Activated B cell treated with CpG ODN at 0.5 μM for 24 hours (primary cell): ENCODE measurements at regions of chr17 and their contacts with region 1.

Region 1: GRCh38 chr17:64506576-64507477 is at the start of gene CEP95:
- DNase-seq: peak; percentile 91
- ATAC-seq: peak; percentile 53
- H3K4me3 Mint-ChIP-seq: peak within 1 kb of the TSS; percentile 100
- H3K27ac Mint-ChIP-seq: peak within 1 kb of the TSS; percentile 100
- H3K4me1 Mint-ChIP-seq: peaks cover 50% of the 10 kb centered on the region
- H3K27me3 Mint-ChIP-seq: no peaks in the 10 kb centered on the region
- CTCF ChIP-seq: no peak
- total RNA-seq, gene CEP95: 65.3 and 77.0 TPM in 2 replicates

Region 2: GRCh38 chr17:63697341-63698286 is 809.2 kb before region 1 on chr17:
- CTCF ChIA-PET with region 1: no interaction called
- POLR2A ChIA-PET with region 1: interaction called, 8 read pairs
- intact Hi-C with region 1: loop called (anchors 5 kb)
- DNase-seq: peak; percentile 78
- ATAC-seq: peak; percentile 52
- H3K4me3 Mint-ChIP-seq: peak overlapping the region; percentile 96
- H3K27ac Mint-ChIP-seq: peak overlapping the region; percentile 97
- H3K4me1 Mint-ChIP-seq: peaks cover 70% of the 10 kb centered on the region
- H3K27me3 Mint-ChIP-seq: no peaks in the 10 kb centered on the region
- CTCF ChIP-seq: no peak

Region 3: DNA sequence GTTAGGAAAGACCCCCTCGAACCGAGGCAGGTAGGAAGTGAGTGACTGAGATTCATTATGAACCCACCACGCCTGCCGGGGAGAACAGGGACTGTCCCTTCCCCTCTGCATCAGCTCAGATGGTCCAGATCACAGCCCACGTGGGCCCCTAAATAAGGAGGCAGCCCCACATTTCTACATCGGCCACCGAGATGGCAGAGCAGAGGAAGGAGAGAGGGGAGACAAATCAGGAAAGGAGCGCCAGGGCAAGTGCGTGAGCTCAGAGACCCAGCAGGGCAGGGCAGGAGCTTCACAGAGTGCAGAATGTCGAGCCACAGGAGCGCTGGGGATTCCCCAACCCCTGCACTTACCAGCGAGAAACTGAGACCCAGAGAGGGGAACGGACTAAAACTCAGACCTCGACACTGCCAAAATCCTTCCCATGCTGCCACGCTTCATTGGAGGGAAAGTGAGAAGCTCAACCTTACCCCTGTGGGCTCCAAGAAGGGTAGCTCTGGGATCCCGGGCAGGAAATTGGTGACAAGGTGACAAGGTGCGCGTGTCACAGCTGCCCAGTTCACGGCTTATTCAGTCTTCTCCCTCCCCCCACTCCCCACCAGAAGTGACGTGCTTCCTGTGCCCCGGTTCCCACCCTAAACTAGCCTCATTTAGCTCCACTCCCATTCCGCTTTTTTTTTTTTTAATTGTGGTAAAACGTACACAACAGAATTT is 486.6 kb before region 1 on chr17 and contains the start of gene ICAM2:
- CTCF ChIA-PET with region 1: no interaction called
- POLR2A ChIA-PET with region 1: interaction called, 16 read pairs
- intact Hi-C with region 1: loop called (anchors 1 kb)
- DNase-seq: peak; percentile 69
- ATAC-seq: peak; percentile 78
- H3K4me3 Mint-ChIP-seq: peak within 1 kb of the TSS; percentile 97
- H3K27ac Mint-ChIP-seq: peak within 1 kb of the TSS; percentile 99
- H3K4me1 Mint-ChIP-seq: peaks cover 81% of the 10 kb centered on the region
- H3K27me3 Mint-ChIP-seq: no peaks in the 10 kb centered on the region
- CTCF ChIP-seq: no peak
- total RNA-seq, gene ICAM2: 44.5 and 44.7 TPM in 2 replicates

Region 4: DNA sequence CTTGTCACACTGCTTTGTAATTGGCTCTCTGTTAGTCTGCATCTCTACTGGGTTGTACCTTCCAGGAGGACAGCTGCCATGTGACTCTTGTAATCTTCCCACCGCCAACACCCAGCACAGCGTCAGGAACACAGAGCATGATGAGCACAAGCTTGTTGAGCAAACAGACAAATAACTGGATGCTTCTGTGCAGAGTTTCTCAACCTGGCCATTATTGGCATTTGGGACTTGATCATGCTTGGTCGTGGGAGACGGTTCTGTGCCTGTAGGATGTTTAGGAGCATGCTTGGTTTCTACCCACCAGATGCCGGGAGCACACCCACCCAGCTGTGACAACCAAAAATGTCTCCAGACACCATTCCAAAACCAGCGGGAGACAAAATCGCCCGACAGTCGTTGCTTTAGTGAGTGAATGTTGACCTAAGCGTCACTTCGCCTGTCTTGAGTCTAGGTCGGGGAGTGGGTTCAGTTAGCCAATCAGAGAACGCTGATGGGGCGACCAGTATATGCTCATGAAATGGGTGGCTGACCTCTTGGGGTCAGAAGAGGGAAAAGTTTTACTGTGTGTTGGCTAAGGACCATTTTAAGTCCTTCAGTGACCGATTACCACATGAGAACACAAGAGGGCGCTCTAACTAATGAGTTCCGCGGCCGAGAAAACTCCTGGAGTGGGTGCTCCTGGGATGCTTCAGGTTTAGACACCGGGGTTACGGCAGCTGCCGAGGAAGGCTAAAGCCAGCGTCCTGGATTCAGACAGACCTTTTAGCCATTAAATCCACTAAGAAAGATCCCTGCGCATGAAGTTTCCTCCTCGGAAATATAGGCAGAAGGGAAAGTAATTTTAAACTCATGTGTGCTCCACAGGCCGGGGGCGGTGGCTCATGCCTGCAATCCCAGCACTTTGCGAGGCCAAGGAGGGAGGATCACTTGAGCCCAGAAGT is 185.9 kb before region 1 on chr17:
- CTCF ChIA-PET with region 1: interaction called, 3 read pairs
- POLR2A ChIA-PET with region 1: interaction called, 4 read pairs
- intact Hi-C with region 1: loop called (anchors 1 kb)
- DNase-seq: peak; percentile 21
- ATAC-seq: no peak
- H3K4me3 Mint-ChIP-seq: peak overlapping the region; percentile 55
- H3K27ac Mint-ChIP-seq: no peak overlapping the region
- H3K4me1 Mint-ChIP-seq: peaks cover 43% of the 10 kb centered on the region
- H3K27me3 Mint-ChIP-seq: peaks cover 2% of the 10 kb centered on the region
- CTCF ChIP-seq: no peak

Region 5: DNA sequence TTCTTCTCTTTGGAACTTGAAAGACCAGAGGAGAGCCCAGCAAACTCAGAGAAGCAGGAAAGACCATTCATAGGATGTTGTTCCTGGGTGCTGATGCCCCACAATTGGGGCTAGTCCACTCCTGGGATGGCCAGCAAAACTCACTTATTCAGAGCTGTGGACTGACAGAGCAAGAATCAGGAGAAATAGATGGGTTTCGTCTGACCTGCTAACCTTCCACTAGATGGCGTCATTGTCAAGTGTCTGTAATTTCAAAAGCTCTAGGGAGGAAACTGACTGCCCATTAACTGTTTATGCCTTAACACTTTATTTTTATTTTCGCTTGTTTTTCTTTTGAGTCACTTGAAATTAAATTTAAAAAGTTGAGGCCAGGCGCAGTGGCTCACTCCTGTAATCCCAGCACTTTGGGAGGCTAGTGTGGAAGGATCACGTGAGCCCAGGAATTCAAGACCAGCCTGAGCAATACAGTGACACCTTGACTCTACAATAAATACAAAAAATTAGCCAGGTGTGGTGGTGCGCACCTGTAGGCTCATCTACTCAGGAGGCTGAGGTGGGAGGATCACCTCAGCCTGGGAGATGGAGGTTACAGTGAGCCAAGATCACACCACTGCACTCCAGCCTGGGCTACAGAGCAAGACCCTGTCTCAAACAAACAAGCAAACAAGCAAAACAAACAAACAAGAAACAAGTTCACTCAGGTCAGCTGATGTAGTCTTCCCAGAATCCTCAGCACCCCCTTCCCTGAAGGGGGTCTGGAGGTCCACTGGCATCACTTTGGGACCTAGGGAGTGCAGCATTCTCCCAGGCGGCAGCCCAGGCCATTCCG is 86.5 kb before region 1 on chr17:
- CTCF ChIA-PET with region 1: interaction called, 55 read pairs
- POLR2A ChIA-PET with region 1: interaction called, 82 read pairs
- intact Hi-C with region 1: loop called (anchors 1 kb)
- DNase-seq: no peak
- ATAC-seq: peak; percentile 78
- H3K4me3 Mint-ChIP-seq: no peak overlapping the region
- H3K27ac Mint-ChIP-seq: no peak overlapping the region
- H3K4me1 Mint-ChIP-seq: peaks cover 4% of the 10 kb centered on the region
- H3K27me3 Mint-ChIP-seq: no peaks in the 10 kb centered on the region
- CTCF ChIP-seq: peak; percentile 30

Region 6: DNA sequence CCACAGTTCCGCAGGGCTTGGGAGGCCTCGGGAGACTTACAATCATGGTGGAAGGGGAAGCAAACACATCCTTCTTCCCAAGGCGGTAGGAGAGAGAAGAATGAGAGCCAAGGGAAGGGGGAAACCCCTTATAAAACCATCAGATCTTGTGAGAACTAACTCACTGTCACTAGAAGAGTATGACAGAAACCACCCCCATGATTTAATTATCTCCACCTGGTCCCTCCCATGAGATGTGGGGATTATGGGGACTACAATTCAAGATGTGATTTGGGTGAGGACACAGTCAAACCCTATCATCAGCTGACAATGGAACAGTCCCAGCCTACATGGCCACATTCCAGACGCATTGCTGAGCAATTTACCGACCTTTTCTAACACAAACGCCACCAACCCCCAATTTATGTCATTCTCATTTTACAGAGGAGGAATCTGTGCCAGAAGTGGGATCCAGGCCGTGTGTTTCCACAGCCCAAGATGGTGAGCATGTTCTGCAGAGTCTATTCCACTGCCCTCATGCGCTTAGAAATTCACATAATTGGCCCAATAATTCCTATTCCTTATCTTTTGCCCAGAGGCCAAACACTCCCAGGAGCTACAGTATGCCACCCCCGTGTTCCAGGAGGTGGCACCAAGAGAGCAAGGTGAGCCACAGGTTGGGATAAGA is 40.7 kb before region 1 on chr17:
- CTCF ChIA-PET with region 1: no interaction called
- POLR2A ChIA-PET with region 1: no interaction called
- intact Hi-C with region 1: no loop called
- DNase-seq: no peak
- ATAC-seq: no peak
- H3K4me3 Mint-ChIP-seq: no peak overlapping the region
- H3K27ac Mint-ChIP-seq: no peak overlapping the region
- H3K4me1 Mint-ChIP-seq: no peaks in the 10 kb centered on the region
- H3K27me3 Mint-ChIP-seq: no peaks in the 10 kb centered on the region
- CTCF ChIP-seq: no peak

Region 7: GRCh38 chr17:64661976-64662773 is 155.3 kb after region 1 on chr17 and contains the start of gene SMURF2:
- CTCF ChIA-PET with region 1: interaction called, 3 read pairs
- POLR2A ChIA-PET with region 1: interaction called, 17 read pairs
- intact Hi-C with region 1: loop called (anchors 1 kb)
- DNase-seq: peak; percentile 83
- ATAC-seq: peak; percentile 85
- H3K4me3 Mint-ChIP-seq: peak within 1 kb of the TSS; percentile 96
- H3K27ac Mint-ChIP-seq: peak within 1 kb of the TSS; percentile 95
- H3K4me1 Mint-ChIP-seq: peaks cover 28% of the 10 kb centered on the region
- H3K27me3 Mint-ChIP-seq: no peaks in the 10 kb centered on the region
- CTCF ChIP-seq: no peak
- total RNA-seq, gene SMURF2: 18.9 and 23.0 TPM in 2 replicates